Activated naive CD4-positive, alpha-beta T cell treated with anti-CD3 and anti-CD28 coated beads for 36 hours (primary cell): ENCODE measurements at regions of chr11 and their contacts with region 1.

Region 1: GRCh38 chr11:111512296-111513239 is at the start of gene BTG4:
- DNase-seq: peak; percentile 48
- H3K4me3 Mint-ChIP-seq: peak within 1 kb of the TSS; percentile 67
- H3K27ac Mint-ChIP-seq: no peak within 1 kb of the TSS
- H3K4me1 Mint-ChIP-seq: peaks cover 22% of the 10 kb centered on the region
- H3K27me3 Mint-ChIP-seq: peaks cover 39% of the 10 kb centered on the region
- total RNA-seq, gene BTG4: not detected

Region 2: GRCh38 chr11:110991661-110992355 is 520.8 kb before region 1 on chr11:
- CTCF ChIA-PET with region 1: no interaction called
- intact Hi-C with region 1: no loop called
- DNase-seq: no peak
- H3K4me3 Mint-ChIP-seq: no peak overlapping the region
- H3K27ac Mint-ChIP-seq: no peak overlapping the region
- H3K4me1 Mint-ChIP-seq: no peaks in the 10 kb centered on the region
- H3K27me3 Mint-ChIP-seq: no peaks in the 10 kb centered on the region

Region 3: GRCh38 chr11:111460856-111461255 is 51.7 kb before region 1 on chr11:
- CTCF ChIA-PET with region 1: interaction called, 3 read pairs
- intact Hi-C with region 1: loop called (anchors 5 kb)
- DNase-seq: no peak
- H3K4me3 Mint-ChIP-seq: no peak overlapping the region
- H3K27ac Mint-ChIP-seq: no peak overlapping the region
- H3K4me1 Mint-ChIP-seq: no peaks in the 10 kb centered on the region
- H3K27me3 Mint-ChIP-seq: peaks cover 14% of the 10 kb centered on the region

Region 4: DNA sequence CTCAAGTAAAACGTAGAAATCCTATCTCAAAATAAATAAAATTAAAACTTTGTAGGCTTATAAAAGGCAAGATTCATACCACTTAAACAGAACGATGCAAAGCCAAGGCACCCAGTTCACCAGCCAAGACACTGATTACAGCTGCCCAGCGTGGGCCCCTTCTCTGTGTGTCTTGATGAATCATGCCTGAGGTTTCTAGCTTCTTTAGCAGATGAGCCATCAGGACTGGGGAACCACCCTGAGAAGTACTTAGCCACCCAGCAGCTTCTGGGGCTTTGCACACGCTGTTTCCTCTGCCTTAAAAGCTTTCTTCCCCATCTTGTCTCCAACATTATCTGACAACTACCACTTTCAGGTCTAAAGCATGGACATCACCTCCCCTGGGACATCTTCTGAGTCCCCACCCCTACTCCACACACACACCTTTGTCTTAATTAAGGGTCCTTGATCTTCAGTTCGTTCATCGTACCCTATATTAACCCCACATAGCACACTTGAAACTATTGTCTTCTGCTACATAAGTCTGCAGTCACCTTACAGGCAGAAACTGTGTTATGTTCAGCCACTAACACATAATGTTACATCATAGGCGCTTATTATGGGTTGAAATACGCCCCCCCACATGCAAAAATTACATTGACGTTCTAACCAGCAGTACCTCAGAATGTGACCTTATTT is 19.3 kb after region 1 on chr11:
- CTCF ChIA-PET with region 1: interaction called, 7 read pairs
- intact Hi-C with region 1: loop called (anchors 1 kb)
- DNase-seq: peak; percentile 88
- H3K4me3 Mint-ChIP-seq: no peak overlapping the region
- H3K27ac Mint-ChIP-seq: peak overlapping the region; percentile 82
- H3K4me1 Mint-ChIP-seq: peaks cover 47% of the 10 kb centered on the region
- H3K27me3 Mint-ChIP-seq: peaks cover 16% of the 10 kb centered on the region

Region 5: GRCh38 chr11:111540114-111540936 is 27.8 kb after region 1 on chr11 and contains the start of gene LAYN:
- CTCF ChIA-PET with region 1: no interaction called
- intact Hi-C with region 1: loop called (anchors 2 kb)
- DNase-seq: peak; percentile 35
- H3K4me3 Mint-ChIP-seq: peak within 1 kb of the TSS; percentile 67
- H3K27ac Mint-ChIP-seq: peak within 1 kb of the TSS; percentile 61
- H3K4me1 Mint-ChIP-seq: peaks cover 22% of the 10 kb centered on the region
- H3K27me3 Mint-ChIP-seq: peaks cover 45% of the 10 kb centered on the region
- total RNA-seq, gene LAYN: 3.5 to 4.1 TPM